ENCODE measurements at regions of chr4 and their contacts with region 1.

Region 1: DNA sequence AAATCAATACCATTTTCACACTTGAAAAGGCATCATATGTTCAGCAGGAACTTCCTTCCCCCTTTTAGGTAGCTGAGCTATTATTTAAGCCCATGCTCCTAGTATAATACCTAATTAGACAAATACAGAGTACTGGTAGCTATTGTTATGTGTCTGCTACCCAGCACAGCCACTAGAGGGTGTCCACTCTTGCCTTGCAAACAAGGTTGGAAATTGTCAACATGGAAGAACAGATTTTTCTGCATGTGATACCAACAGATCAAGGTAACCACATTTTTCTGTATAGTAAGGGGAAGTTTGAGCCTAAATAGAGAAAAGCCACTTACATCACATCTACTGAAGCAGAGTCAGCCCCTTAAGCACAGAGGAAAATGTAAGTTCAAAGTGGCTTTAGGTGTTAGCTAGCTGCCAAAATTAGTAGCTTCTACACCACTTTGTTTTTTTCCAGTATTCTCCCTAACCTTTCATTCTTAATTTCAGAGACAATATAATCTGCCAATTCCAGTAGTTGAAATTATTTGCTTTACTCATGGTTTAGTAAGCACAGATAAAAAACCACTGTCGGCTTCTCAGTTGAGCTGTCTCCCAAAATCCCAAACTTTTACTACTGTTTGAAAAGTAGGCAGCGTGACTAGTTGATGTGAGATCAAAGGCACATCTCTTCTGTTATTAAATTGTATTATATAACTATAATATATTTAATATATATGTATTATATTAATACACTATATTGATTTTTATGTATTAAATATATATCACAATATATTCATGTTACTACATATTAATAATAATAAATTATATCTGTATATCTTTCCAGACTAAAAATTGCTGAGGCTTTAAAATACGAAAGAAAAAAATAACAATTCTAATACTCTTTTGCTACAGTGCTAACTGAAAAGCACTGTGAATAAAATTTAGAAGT is 38.2 kb downstream of the EDNRA start:
- DNase-seq: peak; percentile 44
- H3K4me3 ChIP-seq: no peak overlapping the region; a peak in 1 of 4 replicates
- H3K27ac ChIP-seq: peak overlapping the region in 1 of 2 experiments; percentile 57; a peak in 1 of 4 replicates
- H3K4me1 ChIP-seq: peaks cover 3 to 10% of the 10 kb centered on the region in 2 experiments; a peak in 2 of 4 replicates
- H3K27me3 ChIP-seq: no peaks in the 10 kb centered on the region
- CTCF ChIP-seq: peak; percentile 93
- EP300 ChIP-seq: no peak
- RAD21 ChIP-seq: peak; percentile 83

Region 2: GRCh38 chr4:147498031-147498660 is 21.0 kb before region 1 on chr4:
- CTCF ChIA-PET with region 1: interaction called, 15 read pairs
- POLR2A ChIA-PET with region 1: no interaction called
- DNase-seq: no peak
- H3K4me3 ChIP-seq: no peak overlapping the region
- H3K27ac ChIP-seq: peak overlapping the region in 1 of 2 experiments; percentile 71; a peak in 2 of 4 replicates
- H3K4me1 ChIP-seq: peaks cover 2 to 9% of the 10 kb centered on the region in 2 experiments; a peak in 2 of 4 replicates
- H3K27me3 ChIP-seq: no peaks in the 10 kb centered on the region
- CTCF ChIP-seq: no peak
- EP300 ChIP-seq: no peak
- RAD21 ChIP-seq: no peak

Measured in SK-N-SH (cell line).